ENCODE measurements at regions of chr11 and their contacts with region 1.

Region 1: DNA sequence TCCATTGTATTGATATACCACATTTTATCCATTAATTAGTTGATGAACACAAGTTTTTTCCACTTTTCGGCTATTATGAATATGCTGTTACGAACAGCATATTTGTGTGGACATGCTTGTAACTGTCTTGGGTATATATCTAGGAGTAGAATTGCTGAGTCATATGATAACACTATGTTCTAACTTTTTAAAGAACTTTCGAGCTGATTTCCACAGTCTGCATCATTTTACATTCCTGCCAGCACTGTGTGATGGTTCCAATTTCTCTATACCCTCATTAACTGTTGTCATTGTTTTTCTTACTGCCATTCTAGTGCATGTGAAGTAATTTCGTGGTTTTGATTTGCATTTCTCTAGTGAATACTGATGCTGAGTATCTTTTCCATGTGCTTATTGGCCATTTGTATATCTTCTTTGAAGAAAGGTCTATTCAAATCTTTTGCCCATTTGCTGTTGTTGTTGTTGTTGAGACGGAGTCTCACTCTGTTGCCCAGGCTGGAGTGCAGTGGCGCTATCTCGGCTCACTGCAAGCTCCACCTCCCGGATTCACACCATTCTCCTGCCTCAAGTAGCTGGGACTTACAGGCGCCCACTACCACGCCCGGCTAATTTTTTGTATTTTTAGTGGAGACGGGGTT is 7.4 kb upstream of the RCE1 start:
- DNase-seq: no peak
- H3K4me3 ChIP-seq: no peak overlapping the region
- CTCF ChIP-seq: no peak
- POLR2A ChIP-seq: no peak

Region 2: DNA sequence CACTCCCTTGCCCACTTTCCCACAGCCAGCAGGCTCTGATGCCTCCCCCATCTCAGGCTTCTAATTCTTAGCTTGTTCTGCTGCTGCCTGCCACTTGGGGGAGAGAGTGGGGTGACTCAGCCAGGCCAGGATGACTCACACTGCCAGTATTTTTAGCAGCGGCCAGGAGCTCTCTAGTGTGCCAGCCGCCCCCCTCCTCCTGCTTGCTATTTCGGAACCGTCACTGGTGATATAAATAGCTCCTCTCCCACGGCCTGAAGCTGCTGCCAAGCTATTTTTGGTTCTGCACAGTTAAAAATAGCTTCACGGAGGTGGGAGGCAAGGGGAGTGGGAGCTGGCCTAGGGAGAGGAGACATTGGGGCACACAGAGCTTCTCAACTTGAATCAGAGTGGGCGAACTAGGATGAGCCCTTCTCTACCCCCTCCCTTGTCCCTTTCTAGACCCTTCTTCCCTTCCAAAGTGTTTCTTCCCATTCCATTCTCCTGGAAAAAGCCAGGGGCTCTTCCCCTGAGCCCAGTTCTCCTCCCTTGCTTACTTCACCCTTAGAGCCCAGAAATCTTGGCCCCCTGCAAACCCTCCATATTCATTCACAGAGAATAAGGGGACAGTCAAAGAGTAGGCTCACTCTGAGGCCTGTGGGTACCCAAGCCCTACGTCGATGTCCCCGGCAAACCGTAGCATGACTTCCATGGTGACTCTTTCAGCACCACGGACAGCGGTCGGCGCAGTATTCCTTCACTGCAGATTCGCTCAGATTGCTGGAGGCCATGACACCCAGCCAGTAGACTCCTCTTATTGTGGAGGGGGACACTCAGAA is 417.5 kb before region 1 on chr11:
- intact Hi-C with region 1: loop called (anchors 10 kb)
- DNase-seq: peak; percentile 31 to 89
- H3K4me3 ChIP-seq: no peak overlapping the region
- CTCF ChIP-seq: no peak
- POLR2A ChIP-seq: no peak

Region 3: GRCh38 chr11:66694732-66695207 is 141.1 kb before region 1 on chr11:
- intact Hi-C with region 1: loop called (anchors 5 kb)
- DNase-seq: peak; percentile 82 to 96
- H3K4me3 ChIP-seq: no peak overlapping the region
- CTCF ChIP-seq: peak in 1 of 3 donors; percentile 96
- POLR2A ChIP-seq: no peak

Region 4: GRCh38 chr11:66787912-66788758 is 47.8 kb before region 1 on chr11:
- intact Hi-C with region 1: no loop called
- DNase-seq: no peak
- H3K4me3 ChIP-seq: no peak overlapping the region
- CTCF ChIP-seq: no peak
- POLR2A ChIP-seq: no peak

Region 5: GRCh38 chr11:68257475-68258362 is 1421.8 kb after region 1 on chr11:
- intact Hi-C with region 1: no loop called
- DNase-seq: peak; percentile 95 to 99
- H3K4me3 ChIP-seq: no peak overlapping the region
- CTCF ChIP-seq: peak in 1 of 3 donors; percentile 78
- POLR2A ChIP-seq: no peak